ENCODE measurements at regions of chr12 and their contacts with region 1.

Region 1: DNA sequence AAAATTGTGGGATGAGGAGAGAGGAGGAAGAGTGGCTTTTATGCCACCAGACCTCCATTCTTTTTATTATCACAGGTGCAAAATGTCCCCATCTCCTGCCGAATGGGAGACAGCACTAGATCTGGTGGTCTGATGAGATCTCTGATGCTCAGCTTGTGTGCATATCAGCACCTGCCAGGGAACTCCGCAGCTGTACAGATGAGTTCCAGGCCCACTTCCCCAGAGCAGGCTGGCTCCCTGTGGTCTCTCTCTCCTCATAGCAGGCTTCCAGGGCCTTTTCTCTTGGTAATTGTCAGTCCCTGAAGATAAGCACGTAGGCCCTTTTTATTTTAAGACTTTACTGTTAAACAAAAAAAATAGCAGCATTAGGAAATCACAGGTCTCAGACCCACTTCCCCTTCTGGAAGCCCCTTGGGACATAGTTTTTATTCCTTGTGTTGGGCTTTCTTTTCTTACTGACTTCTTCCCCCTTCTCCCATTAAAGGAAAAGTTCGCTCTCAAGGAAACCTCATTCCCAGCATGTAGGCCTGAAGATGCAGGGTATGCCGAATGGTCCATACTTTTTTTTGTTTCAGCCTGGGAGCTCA is 4.5 kb upstream of the TBC1D30 start:
- DNase-seq: no peak
- ATAC-seq: no peak
- H3K4me3 ChIP-seq: no peak overlapping the region
- H3K27ac ChIP-seq: no peak overlapping the region
- H3K4me1 ChIP-seq: no peaks in the 10 kb centered on the region
- H3K27me3 ChIP-seq: no peaks in the 10 kb centered on the region
- CTCF ChIP-seq: no peak

Region 2: GRCh38 chr12:65156366-65156841 is 336.5 kb after region 1 on chr12:
- CTCF ChIA-PET with region 1: interaction called, 10 read pairs
- POLR2A ChIA-PET with region 1: no interaction called
- in situ Hi-C with region 1: no loop called
- intact Hi-C with region 1: no loop called
- DNase-seq: no peak
- ATAC-seq: no peak
- H3K4me3 ChIP-seq: no peak overlapping the region
- H3K27ac ChIP-seq: no peak overlapping the region
- H3K4me1 ChIP-seq: no peaks in the 10 kb centered on the region
- H3K27me3 ChIP-seq: peaks cover 22% of the 10 kb centered on the region; the same call in 1 of the 2 replicates
- CTCF ChIP-seq: no peak